Mammary epithelial cell (primary cell): ENCODE measurements at regions of chr17 and their contacts with region 1.

Region 1: GRCh38 chr17:48878918-48879898 is 13.4 kb upstream of the ATP5MC1 start:
- DNase-seq: peak; percentile 48
- H3K4me3 ChIP-seq: no peak overlapping the region
- H3K27ac ChIP-seq: no peak overlapping the region
- H3K4me1 ChIP-seq: no peaks in the 10 kb centered on the region
- H3K27me3 ChIP-seq: no peaks in the 10 kb centered on the region
- CTCF ChIP-seq: peak; percentile 94 to 98

Region 2: DNA sequence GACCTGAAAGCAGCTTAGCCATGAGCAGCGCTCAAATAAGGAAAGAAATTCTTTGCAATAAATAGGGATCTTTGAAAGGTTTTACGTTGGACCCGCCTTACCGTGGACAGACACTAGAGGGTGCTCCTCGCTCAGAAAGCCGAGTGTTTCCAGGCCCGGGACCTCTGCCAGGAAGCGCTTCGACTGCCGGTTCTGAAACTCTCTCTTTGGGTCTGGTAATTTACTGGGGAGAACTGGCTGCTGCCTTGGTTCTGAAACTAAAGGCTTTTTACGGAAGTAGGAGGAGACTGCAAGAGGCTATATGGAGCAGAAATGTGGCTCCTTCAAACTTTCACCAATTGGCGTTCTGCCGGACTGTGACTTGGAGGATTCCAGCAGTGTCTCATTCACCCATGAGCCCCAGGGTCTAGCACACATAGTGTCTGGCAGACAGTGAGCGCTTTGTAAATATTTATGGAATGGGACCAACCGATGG is 207.5 kb before region 1 on chr17:
- CTCF ChIA-PET with region 1: interaction called, 10 read pairs
- dilution Hi-C with region 1: loop called (anchors 5 kb)
- in situ Hi-C with region 1: loop called (anchors 5 kb)
- intact Hi-C with region 1: loop called (anchors 1 kb)
- DNase-seq: peak; percentile 46
- H3K4me3 ChIP-seq: peak overlapping the region; percentile 40 to 55 (median 49)
- H3K27ac ChIP-seq: no peak overlapping the region
- H3K4me1 ChIP-seq: no peaks in the 10 kb centered on the region
- H3K27me3 ChIP-seq: no peaks in the 10 kb centered on the region
- CTCF ChIP-seq: peak; percentile 76 to 93

Region 3: GRCh38 chr17:48724251-48725003 is 154.8 kb before region 1 on chr17:
- CTCF ChIA-PET with region 1: interaction called, 6 read pairs
- dilution Hi-C with region 1: no loop called
- in situ Hi-C with region 1: no loop called
- intact Hi-C with region 1: loop called (anchors 1 kb)
- DNase-seq: peak; percentile 51
- H3K4me3 ChIP-seq: no peak overlapping the region
- H3K27ac ChIP-seq: no peak overlapping the region
- H3K4me1 ChIP-seq: no peaks in the 10 kb centered on the region
- H3K27me3 ChIP-seq: peaks cover 83% of the 10 kb centered on the region
- CTCF ChIP-seq: peak; percentile 54 to 76

Region 4: GRCh38 chr17:48804925-48805411 is 74.2 kb before region 1 on chr17:
- CTCF ChIA-PET with region 1: interaction called, 5 read pairs
- dilution Hi-C with region 1: loop called (anchors 5 kb)
- in situ Hi-C with region 1: loop called (anchors 5 kb)
- intact Hi-C with region 1: loop called (anchors 1 kb)
- DNase-seq: peak; percentile 21
- H3K4me3 ChIP-seq: no peak overlapping the region
- H3K27ac ChIP-seq: no peak overlapping the region
- H3K4me1 ChIP-seq: no peaks in the 10 kb centered on the region
- H3K27me3 ChIP-seq: no peaks in the 10 kb centered on the region
- CTCF ChIP-seq: peak; percentile 73 to 96

Region 5: DNA sequence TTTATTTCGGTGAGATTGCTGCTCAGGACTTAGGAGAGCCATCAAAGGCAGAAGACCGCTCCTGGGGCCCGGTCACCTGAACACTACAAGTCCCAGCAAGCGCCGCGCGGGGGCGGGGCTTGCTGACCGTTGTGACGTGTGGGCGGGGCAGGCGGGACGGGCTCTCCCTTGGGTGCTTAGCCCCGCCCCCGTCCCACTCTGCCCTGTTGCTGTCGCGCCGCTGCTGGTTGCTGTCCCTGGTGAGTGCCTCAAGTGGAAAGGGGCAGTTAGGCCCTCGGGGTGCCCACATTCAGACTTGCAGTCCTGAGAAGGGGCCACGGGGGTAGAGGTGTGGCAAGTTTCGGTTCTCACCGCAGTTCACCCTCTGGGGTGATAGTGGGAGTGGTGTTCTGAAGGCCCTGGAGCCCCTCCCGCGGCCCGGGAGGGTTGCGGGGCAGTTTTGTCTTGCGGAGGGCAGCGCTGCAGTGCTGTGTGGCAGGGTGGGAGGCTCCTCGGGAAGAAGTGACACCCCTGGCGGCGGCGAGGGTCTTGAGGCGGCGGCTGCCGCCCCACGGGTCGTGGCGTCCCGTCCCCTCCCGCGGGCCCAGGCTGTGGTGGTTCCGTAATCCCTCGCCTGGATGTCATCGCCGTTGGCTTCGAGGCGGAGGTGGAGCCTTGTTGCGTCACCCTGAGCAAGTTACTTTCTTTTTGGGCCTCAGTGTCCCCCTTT is 48.2 kb before region 1 on chr17 and contains the start of gene CALCOCO2:
- CTCF ChIA-PET with region 1: interaction called, 22 read pairs
- dilution Hi-C with region 1: no loop called
- in situ Hi-C with region 1: no loop called
- intact Hi-C with region 1: no loop called
- DNase-seq: peak; percentile 91
- H3K4me3 ChIP-seq: peak within 1 kb of the TSS; percentile 57 to 84 (median 77)
- H3K27ac ChIP-seq: peak within 1 kb of the TSS; percentile 92
- H3K4me1 ChIP-seq: peaks cover 5% of the 10 kb centered on the region
- H3K27me3 ChIP-seq: no peaks in the 10 kb centered on the region
- CTCF ChIP-seq: no peak
- total RNA-seq, gene CALCOCO2: 51.7 to 104 TPM

Region 6: DNA sequence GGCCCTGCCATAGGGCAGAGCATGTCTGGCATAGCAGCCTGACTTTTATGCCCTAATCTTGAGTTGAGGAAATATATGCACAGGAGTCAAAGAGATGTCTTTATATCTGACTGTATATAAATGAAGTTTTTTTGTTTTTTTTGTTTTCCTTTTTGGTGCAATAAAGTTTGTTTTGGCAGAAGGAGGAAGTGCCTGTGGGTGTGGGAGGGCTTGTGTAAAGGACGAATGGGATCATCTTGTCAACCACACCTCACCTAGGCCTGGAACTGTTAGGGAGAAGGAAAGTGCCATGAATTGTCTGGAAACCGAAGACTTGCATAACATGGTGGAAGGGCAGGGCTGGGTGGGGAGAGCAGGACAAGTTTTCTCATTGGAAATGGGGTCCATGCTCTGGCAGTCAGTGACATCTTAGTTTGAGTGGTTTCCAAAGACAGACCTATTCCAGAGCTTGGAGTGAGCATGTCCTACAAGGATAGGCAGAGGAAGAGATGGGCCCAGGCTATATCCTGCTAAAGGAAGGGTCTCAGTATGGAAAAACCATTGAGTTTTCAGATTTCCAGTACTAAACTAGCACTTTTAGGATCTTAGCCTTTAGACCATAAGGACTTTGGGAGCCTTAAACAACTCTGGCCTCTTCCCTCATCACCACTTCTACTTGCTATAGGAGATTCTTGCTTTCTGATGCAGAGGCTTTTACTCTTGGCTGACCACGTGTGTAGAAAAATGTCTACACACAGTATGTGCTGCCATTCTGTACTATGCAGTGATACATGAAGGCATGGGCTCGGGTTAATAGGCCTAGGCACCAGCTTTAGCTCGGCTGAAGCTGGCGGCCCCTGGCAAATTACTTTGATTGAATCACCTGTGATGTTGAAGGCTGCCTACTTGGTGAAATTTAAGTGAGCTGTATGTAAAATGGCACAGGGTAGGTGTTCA is 49.9 kb after region 1 on chr17:
- CTCF ChIA-PET with region 1: no interaction called
- dilution Hi-C with region 1: no loop called
- in situ Hi-C with region 1: no loop called
- intact Hi-C with region 1: no loop called
- DNase-seq: no peak
- H3K4me3 ChIP-seq: no peak overlapping the region
- H3K27ac ChIP-seq: no peak overlapping the region
- H3K4me1 ChIP-seq: no peaks in the 10 kb centered on the region
- H3K27me3 ChIP-seq: no peaks in the 10 kb centered on the region
- CTCF ChIP-seq: no peak